Mammary epithelial cell (primary cell): ENCODE measurements at regions of chr19 and their contacts with region 1.

Region 1: GRCh38 chr19:49097455-49098288 is 12.4 kb downstream of the SNRNP70 start:
- DNase-seq: peak; percentile 67
- H3K4me3 ChIP-seq: no peak overlapping the region
- H3K27ac ChIP-seq: no peak overlapping the region
- H3K4me1 ChIP-seq: peaks cover 7% of the 10 kb centered on the region
- H3K27me3 ChIP-seq: no peaks in the 10 kb centered on the region
- CTCF ChIP-seq: peak; percentile 98 to 100

Region 2: GRCh38 chr19:49127674-49128544 is 30.2 kb after region 1 on chr19:
- CTCF ChIA-PET with region 1: interaction called, 12 read pairs
- dilution Hi-C with region 1: no loop called
- in situ Hi-C with region 1: no loop called
- intact Hi-C with region 1: no loop called
- DNase-seq: peak; percentile 93
- H3K4me3 ChIP-seq: peak overlapping the region; percentile 40 to 52 (median 49)
- H3K27ac ChIP-seq: no peak overlapping the region
- H3K4me1 ChIP-seq: peaks cover 5% of the 10 kb centered on the region
- H3K27me3 ChIP-seq: no peaks in the 10 kb centered on the region
- CTCF ChIP-seq: peak in 1 of 2 donors; percentile 33

Region 3: GRCh38 chr19:49200238-49200862 is 102.7 kb after region 1 on chr19:
- CTCF ChIA-PET with region 1: interaction called, 14 read pairs
- dilution Hi-C with region 1: no loop called
- in situ Hi-C with region 1: loop called (anchors 10 kb)
- intact Hi-C with region 1: loop called (anchors 1 kb)
- DNase-seq: no peak
- H3K4me3 ChIP-seq: no peak overlapping the region
- H3K27ac ChIP-seq: no peak overlapping the region
- H3K4me1 ChIP-seq: peaks cover 25% of the 10 kb centered on the region
- H3K27me3 ChIP-seq: no peaks in the 10 kb centered on the region
- CTCF ChIP-seq: no peak